PC-3 (cell line): ENCODE measurements at regions of chr10 and their contacts with region 1.

Region 1: GRCh38 chr10:28906934-28907333 is 229.6 kb downstream of the BAMBI start:
- DNase-seq: peak; percentile 51
- ATAC-seq: peak; percentile 62
- H3K4me3 ChIP-seq: no peak overlapping the region
- H3K27ac ChIP-seq: peak overlapping the region; percentile 39
- H3K4me1 ChIP-seq: peaks cover 33% of the 10 kb centered on the region
- H3K27me3 ChIP-seq: no peaks in the 10 kb centered on the region
- CTCF ChIP-seq: no peak

Region 2: GRCh38 chr10:28833313-28833712 is 73.6 kb before region 1 on chr10:
- CTCF ChIA-PET with region 1: no interaction called
- POLR2A ChIA-PET with region 1: interaction called, 6 read pairs
- intact Hi-C with region 1: loop called (anchors 2 kb)
- DNase-seq: no peak
- ATAC-seq: peak; percentile 80
- H3K4me3 ChIP-seq: no peak overlapping the region
- H3K27ac ChIP-seq: no peak overlapping the region
- H3K4me1 ChIP-seq: 0 out of 2 replicates have a peak, but pooled peaks cover 8% of the 10 kb centered on the region
- H3K27me3 ChIP-seq: no peaks in the 10 kb centered on the region
- CTCF ChIP-seq: no peak

Region 3: DNA sequence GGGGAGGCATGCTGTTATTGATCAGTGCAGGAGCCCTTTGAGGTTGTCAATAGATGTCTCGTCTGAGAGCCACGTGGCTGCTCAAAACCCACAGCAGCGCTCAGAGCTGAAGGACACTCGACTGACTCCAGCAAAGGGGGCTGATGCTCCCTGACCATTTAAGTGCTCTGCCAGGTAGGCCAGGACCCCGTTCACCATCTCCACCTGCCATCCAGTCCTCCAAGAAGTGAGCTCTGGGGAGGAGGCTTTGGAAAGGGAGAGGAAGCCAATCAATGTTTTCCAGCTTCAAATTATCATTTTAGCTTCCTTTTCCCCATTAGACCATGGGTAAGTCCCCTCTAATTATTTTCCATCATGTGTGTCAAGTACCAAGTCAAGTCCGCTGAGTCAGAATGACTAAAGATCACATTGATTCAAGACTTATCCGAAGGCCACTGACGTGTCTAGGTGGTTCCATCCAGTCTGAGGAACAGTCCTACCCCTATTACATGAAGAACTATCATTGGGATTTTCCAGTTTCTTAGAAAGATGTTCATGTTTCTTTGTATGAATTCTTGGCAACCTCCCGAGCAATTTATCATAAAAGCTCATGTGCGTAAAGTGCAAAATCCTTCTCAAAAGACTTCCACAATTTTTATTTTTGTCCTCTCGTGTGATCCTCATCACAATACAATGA is 79.3 kb after region 1 on chr10:
- CTCF ChIA-PET with region 1: no interaction called
- POLR2A ChIA-PET with region 1: no interaction called
- intact Hi-C with region 1: loop called (anchors 5 kb)
- DNase-seq: peak; percentile 61
- ATAC-seq: peak; percentile 22; the same call in 1 of the 2 replicates
- H3K4me3 ChIP-seq: no peak overlapping the region
- H3K27ac ChIP-seq: peak overlapping the region; percentile 56
- H3K4me1 ChIP-seq: peaks cover 33% of the 10 kb centered on the region
- H3K27me3 ChIP-seq: no peaks in the 10 kb centered on the region
- CTCF ChIP-seq: no peak

Region 4: GRCh38 chr10:29105531-29106215 is 198.7 kb after region 1 on chr10:
- CTCF ChIA-PET with region 1: no interaction called
- POLR2A ChIA-PET with region 1: no interaction called
- intact Hi-C with region 1: loop called (anchors 10 kb)
- DNase-seq: peak; percentile 84
- ATAC-seq: peak; percentile 71
- H3K4me3 ChIP-seq: peak overlapping the region; percentile 30; the same call in 1 of the 2 replicates
- H3K27ac ChIP-seq: peak overlapping the region; percentile 92
- H3K4me1 ChIP-seq: peaks cover 55% of the 10 kb centered on the region
- H3K27me3 ChIP-seq: no peaks in the 10 kb centered on the region
- CTCF ChIP-seq: no peak